ENCODE measurements at regions of chr15 and their contacts with region 1.

Region 1: GRCh38 chr15:33476076-33476475 is 165.3 kb downstream of the RYR3 start:
- DNase-seq: no peak
- H3K4me3 ChIP-seq: no peak overlapping the region
- H3K27ac ChIP-seq: no peak overlapping the region
- H3K4me1 ChIP-seq: no peaks in the 10 kb centered on the region
- H3K27me3 ChIP-seq: no peaks in the 10 kb centered on the region
- CTCF ChIP-seq: no peak
- POLR2A ChIP-seq: no peak

Region 2: DNA sequence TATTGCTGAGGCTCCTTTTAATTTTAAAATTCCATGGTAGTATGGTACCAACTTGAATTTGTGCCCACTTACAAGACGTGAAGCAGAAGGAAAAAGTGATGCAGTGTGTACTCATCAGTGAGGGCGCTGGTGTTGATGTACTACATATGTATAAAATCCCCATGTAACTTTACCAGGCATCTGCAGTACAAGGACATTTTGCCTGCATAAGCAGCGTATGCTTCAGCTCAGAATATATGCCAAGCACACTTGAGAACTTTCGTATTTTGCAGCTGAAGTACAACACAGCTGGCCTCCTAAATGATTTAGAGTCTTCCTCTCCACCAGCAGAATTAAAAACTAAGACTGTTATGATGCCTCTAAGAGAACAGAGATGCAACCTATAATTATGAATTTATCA is 56.4 kb before region 1 on chr15:
- intact Hi-C with region 1: loop called (anchors 10 kb)
- DNase-seq: no peak
- H3K4me3 ChIP-seq: no peak overlapping the region
- H3K27ac ChIP-seq: no peak overlapping the region
- H3K4me1 ChIP-seq: peaks cover 0 to 5% (median 0%) of the 10 kb centered on the region in 6 donors
- H3K27me3 ChIP-seq: peaks cover 0 to 9% (median 0%) of the 10 kb centered on the region in 7 donors
- CTCF ChIP-seq: no peak
- POLR2A ChIP-seq: no peak

Measured in spleen (tissue), 13 donors.